ENCODE measurements at regions of chr13 and their contacts with region 1.

Region 1: DNA sequence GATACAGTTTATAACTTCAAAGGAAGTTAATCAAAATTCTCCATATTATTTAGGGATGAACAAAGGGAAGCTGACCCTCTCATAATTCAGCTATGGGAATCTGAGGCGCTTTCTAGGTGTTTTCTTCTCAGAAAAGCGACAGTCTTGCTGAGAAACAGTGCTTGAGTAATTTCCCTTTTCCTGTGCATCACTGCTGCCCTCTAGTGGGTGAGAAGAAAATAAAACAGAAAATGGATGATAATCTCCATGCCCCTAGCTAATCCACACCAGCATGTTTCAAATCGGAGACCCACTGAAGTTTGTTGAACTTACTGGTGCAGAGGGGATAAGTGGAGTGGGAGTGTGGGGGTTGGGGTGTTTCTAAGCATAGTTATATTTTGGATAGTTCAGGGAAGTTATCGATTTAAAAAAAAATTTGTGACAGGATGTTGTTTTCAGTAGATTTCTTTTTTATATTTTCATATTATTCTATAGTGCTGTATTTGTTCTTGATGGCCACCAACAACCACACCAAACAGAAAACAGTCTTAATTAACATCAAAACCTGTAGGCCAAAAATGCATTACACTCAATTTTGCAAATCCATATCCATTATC is 21.4 kb downstream of the LCP1 start:
- DNase-seq: no peak
- ATAC-seq: peak; percentile 62
- H3K4me3 Mint-ChIP-seq: peak overlapping the region; percentile 58
- H3K27ac Mint-ChIP-seq: peak overlapping the region; percentile 89
- H3K4me1 Mint-ChIP-seq: peaks cover 55% of the 10 kb centered on the region
- H3K27me3 Mint-ChIP-seq: no peaks in the 10 kb centered on the region
- CTCF ChIP-seq: peak; percentile 88

Region 2: DNA sequence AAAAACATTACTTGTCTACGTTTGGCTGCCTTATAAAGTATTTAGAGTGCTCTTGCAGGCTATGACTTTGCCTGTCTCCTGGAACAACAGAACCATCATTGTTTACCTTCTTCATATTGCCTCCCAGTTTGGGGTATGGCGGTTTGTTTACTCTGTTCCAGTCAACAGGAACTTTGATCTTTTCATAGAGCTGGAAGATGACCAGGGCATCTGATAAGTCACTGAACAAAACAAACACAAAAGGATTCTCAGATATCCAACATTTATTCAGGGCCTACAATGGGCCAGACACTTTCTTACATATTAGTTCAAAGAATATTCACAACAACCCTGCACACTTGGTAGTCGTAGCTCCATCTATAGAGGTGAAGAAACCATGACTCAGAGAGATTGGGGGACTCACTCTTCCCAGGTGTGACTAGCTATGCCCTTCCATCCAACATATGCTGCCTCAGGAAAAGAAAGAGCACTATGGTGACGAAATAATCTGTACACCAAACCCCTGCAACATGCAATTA is 17.3 kb before region 1 on chr13:
- CTCF ChIA-PET with region 1: interaction called, 67 read pairs
- POLR2A ChIA-PET with region 1: interaction called, 10 read pairs
- intact Hi-C with region 1: no loop called
- DNase-seq: no peak
- ATAC-seq: peak; percentile 29
- H3K4me3 Mint-ChIP-seq: no peak overlapping the region
- H3K27ac Mint-ChIP-seq: peak overlapping the region; percentile 79
- H3K4me1 Mint-ChIP-seq: peaks cover 42% of the 10 kb centered on the region
- H3K27me3 Mint-ChIP-seq: no peaks in the 10 kb centered on the region
- CTCF ChIP-seq: no peak

Region 3: GRCh38 chr13:46176756-46177155 is 16.2 kb after region 1 on chr13:
- CTCF ChIA-PET with region 1: interaction called, 28 read pairs
- POLR2A ChIA-PET with region 1: interaction called, 14 read pairs
- intact Hi-C with region 1: no loop called
- DNase-seq: no peak
- ATAC-seq: no peak
- H3K4me3 Mint-ChIP-seq: peak overlapping the region; percentile 99
- H3K27ac Mint-ChIP-seq: peak overlapping the region; percentile 99
- H3K4me1 Mint-ChIP-seq: peaks cover 60% of the 10 kb centered on the region
- H3K27me3 Mint-ChIP-seq: peaks cover 3% of the 10 kb centered on the region
- CTCF ChIP-seq: no peak

Region 4: DNA sequence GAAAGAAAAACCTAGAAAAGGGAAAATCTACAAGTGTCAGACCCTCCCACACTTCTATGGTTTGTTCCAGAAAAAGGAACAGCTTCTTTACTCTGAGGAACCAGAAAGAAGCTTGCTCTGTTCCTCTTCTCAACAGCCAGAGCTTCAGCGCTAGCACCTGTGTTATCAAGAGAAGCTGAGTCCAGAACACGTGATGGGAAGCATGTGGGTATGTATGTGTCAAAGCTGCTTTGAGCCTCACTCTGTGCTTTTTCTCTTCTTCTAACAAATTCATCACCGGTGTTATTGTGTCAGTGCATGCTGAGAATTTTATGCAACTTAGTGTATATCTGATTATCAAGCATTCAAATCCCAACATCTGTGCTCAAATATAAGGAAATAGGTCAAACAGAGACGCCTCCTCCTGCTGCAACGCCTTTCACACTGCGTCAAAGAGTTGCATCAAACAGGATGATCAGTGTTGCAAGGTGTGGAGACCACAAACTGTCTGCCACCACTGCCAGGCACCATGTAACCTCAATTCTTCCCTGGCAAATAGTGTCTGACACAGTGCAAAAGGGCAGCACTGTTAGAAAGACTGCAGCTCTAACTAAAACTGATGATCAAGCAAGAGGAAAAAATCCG is 135.0 kb after region 1 on chr13:
- CTCF ChIA-PET with region 1: interaction called, 10 read pairs
- POLR2A ChIA-PET with region 1: interaction called, 3 read pairs
- intact Hi-C with region 1: loop called (anchors 5 kb)
- DNase-seq: peak; percentile 81
- ATAC-seq: peak; percentile 86
- H3K4me3 Mint-ChIP-seq: peak overlapping the region; percentile 52
- H3K27ac Mint-ChIP-seq: peak overlapping the region; percentile 94
- H3K4me1 Mint-ChIP-seq: peaks cover 43% of the 10 kb centered on the region
- H3K27me3 Mint-ChIP-seq: no peaks in the 10 kb centered on the region
- CTCF ChIP-seq: no peak

Measured in activated CD8-positive, alpha-beta T cell treated with anti-CD3 and anti-CD28 coated beads for 36 hours (primary cell).